ENCODE measurements at regions of chr10 and their contacts with region 1.

Region 1: GRCh38 chr10:78520737-78521430 is 487.2 kb downstream of the RPS24 start:
- DNase-seq: peak; percentile 73
- H3K4me3 ChIP-seq: no peak overlapping the region
- H3K27ac ChIP-seq: no peak overlapping the region
- H3K4me1 ChIP-seq: peaks cover 7% of the 10 kb centered on the region
- H3K27me3 ChIP-seq: no peaks in the 10 kb centered on the region
- CTCF ChIP-seq: peak; percentile 43 to 67

Region 2: DNA sequence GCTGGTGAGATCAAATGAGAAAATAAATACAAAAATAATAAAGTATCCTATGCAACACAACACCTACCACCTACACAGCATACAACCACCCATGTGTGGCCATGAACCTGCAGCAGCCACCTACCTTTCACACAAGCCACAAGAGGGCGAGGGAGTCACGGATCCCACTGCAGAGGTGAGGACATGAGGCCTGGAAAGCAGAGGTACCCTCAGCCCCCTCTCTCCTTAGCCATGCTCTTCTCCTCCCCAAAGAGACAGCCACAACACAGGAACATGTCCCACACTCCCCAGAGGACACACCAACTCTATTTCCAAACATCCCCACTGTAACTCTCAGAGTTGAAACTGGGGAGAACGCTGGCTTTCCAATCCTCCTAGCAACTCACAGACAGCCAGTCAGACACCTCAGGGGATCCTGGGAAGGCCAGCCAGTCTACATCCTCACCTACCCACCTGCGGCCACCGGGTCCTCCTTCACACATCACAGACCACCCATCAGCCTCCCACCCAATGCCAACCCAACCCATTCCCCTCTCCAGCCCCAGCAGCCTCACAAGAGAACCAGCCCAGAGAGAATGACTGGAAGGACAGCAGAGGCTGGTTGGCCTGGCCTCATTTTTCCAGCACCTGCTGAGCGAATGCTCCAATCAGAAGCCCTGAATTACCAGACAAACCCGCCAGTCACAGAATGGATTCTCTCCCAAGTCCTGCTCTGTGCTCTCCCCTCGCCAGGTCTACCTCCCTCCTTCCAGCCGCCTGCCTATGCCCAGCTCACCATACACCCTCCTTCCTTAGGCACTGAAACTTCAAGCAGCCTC is 612.8 kb before region 1 on chr10:
- CTCF ChIA-PET with region 1: no interaction called
- dilution Hi-C with region 1: no loop called
- in situ Hi-C with region 1: no loop called
- intact Hi-C with region 1: no loop called
- DNase-seq: no peak
- H3K4me3 ChIP-seq: no peak overlapping the region
- H3K27ac ChIP-seq: no peak overlapping the region
- H3K4me1 ChIP-seq: peaks cover 12% of the 10 kb centered on the region
- H3K27me3 ChIP-seq: no peaks in the 10 kb centered on the region
- CTCF ChIP-seq: peak; percentile 39 to 52

Region 3: DNA sequence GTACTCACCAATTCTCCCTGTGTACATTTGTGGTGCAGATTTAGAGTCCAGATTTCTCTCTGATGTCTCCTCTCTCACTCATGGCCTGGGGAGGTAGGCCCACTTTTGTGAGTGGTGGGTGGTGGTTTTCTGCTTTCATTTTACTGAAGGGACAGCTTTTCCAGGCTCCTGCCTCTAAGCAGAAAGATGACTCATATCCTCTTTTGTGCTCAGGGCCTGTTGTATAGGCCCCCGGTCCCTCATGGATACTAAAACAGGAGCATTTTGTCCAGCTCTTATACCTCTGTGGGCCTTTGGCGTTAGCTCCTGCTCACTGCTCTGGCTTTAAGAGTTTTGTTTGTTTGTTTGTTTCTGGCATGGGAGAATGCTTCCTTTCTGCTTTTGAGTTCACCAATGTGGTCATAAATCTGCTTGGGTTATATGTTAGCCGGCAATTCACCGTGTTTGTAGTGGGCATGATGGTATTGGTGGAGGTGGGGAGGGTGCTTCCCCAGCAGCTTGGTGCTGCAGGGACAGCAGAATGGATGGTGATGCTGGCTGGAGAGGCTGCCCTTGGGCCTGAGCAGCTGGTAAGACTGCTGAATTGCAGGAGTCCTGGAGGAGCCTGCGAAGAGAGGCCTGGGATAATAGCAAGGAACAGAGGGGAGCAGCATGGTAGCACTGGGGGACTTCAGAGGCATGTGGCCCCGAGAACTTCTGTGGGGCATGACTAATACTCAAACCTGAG is 18.5 kb before region 1 on chr10:
- CTCF ChIA-PET with region 1: no interaction called
- dilution Hi-C with region 1: no loop called
- in situ Hi-C with region 1: no loop called
- intact Hi-C with region 1: no loop called
- DNase-seq: no peak
- H3K4me3 ChIP-seq: no peak overlapping the region
- H3K27ac ChIP-seq: no peak overlapping the region
- H3K4me1 ChIP-seq: no peaks in the 10 kb centered on the region
- H3K27me3 ChIP-seq: no peaks in the 10 kb centered on the region
- CTCF ChIP-seq: no peak

Region 4: GRCh38 chr10:78541481-78542140 is 20.7 kb after region 1 on chr10:
- CTCF ChIA-PET with region 1: no interaction called
- dilution Hi-C with region 1: no loop called
- in situ Hi-C with region 1: no loop called
- intact Hi-C with region 1: no loop called
- DNase-seq: no peak
- H3K4me3 ChIP-seq: no peak overlapping the region
- H3K27ac ChIP-seq: no peak overlapping the region
- H3K4me1 ChIP-seq: no peaks in the 10 kb centered on the region
- H3K27me3 ChIP-seq: peaks cover 8% of the 10 kb centered on the region
- CTCF ChIP-seq: no peak

Region 5: GRCh38 chr10:78600740-78601139 is 79.9 kb after region 1 on chr10:
- CTCF ChIA-PET with region 1: no interaction called
- dilution Hi-C with region 1: loop called (anchors 5 kb)
- in situ Hi-C with region 1: no loop called
- intact Hi-C with region 1: no loop called
- DNase-seq: peak; percentile 23
- H3K4me3 ChIP-seq: no peak overlapping the region
- H3K27ac ChIP-seq: no peak overlapping the region
- H3K4me1 ChIP-seq: no peaks in the 10 kb centered on the region
- H3K27me3 ChIP-seq: no peaks in the 10 kb centered on the region
- CTCF ChIP-seq: no peak